ENCODE measurements at regions of chr3 and their contacts with region 1.

Region 1: GRCh38 chr3:51941798-51942602 is at the starts of genes PARP3 and RRP9:
- DNase-seq: peak; percentile 97 to 100 (median 99)
- ATAC-seq: peak; percentile 92
- H3K4me3 ChIP-seq: peak within 1 kb of the TSS; percentile 89
- H3K4me3 Mint-ChIP-seq: peak within 1 kb of the TSS; percentile 95
- H3K27ac ChIP-seq: peak within 1 kb of the TSS; percentile 39 to 71
- H3K27ac Mint-ChIP-seq: peak within 1 kb of the TSS; percentile 81
- H3K4me1 ChIP-seq: peaks cover 32% of the 10 kb centered on the region
- H3K4me1 Mint-ChIP-seq: peaks cover 36% of the 10 kb centered on the region
- H3K27me3 ChIP-seq: no peaks in the 10 kb centered on the region
- H3K27me3 Mint-ChIP-seq: no peaks in the 10 kb centered on the region
- CTCF ChIP-seq: peak; percentile 95
- total RNA-seq, gene PARP3: 5.8 to 6.4 TPM
- total RNA-seq, gene RRP9: 6.4 to 7.6 TPM

Region 2: GRCh38 chr3:51967384-51968169 is 25.6 kb after region 1 on chr3 and contains the start of gene PCBP4:
- CTCF ChIA-PET with region 1: no interaction called
- POLR2A ChIA-PET with region 1: interaction called, 13 read pairs
- intact Hi-C with region 1: no loop called
- DNase-seq: peak in 7 of 14 experiments; percentile 40 to 69 (median 53)
- ATAC-seq: peak; percentile 76
- H3K4me3 ChIP-seq: peak within 1 kb of the TSS; percentile 65
- H3K4me3 Mint-ChIP-seq: peak within 1 kb of the TSS; percentile 91
- H3K27ac ChIP-seq: peak within 1 kb of the TSS; percentile 38 to 44
- H3K27ac Mint-ChIP-seq: peak within 1 kb of the TSS; percentile 62
- H3K4me1 ChIP-seq: peaks cover 33% of the 10 kb centered on the region
- H3K4me1 Mint-ChIP-seq: peaks cover 40% of the 10 kb centered on the region
- H3K27me3 ChIP-seq: peaks cover 0 to 2% of the 10 kb centered on the region in 2 experiments
- H3K27me3 Mint-ChIP-seq: no peaks in the 10 kb centered on the region
- CTCF ChIP-seq: no peak
- total RNA-seq, gene PCBP4: 14.7 to 16.8 TPM

Region 3: GRCh38 chr3:51982782-51983577 is 41.0 kb after region 1 on chr3 and contains the start of gene ACY1:
- CTCF ChIA-PET with region 1: interaction called, 7 read pairs
- POLR2A ChIA-PET with region 1: interaction called, 15 read pairs
- intact Hi-C with region 1: no loop called
- DNase-seq: peak in 13 of 14 experiments; percentile 36 to 85 (median 56)
- ATAC-seq: peak; percentile 85
- H3K4me3 ChIP-seq: peak within 1 kb of the TSS; percentile 75
- H3K4me3 Mint-ChIP-seq: peak within 1 kb of the TSS; percentile 93
- H3K27ac ChIP-seq: peak within 1 kb of the TSS; percentile 69 to 85
- H3K27ac Mint-ChIP-seq: peak within 1 kb of the TSS; percentile 81
- H3K4me1 ChIP-seq: peaks cover 42% of the 10 kb centered on the region
- H3K4me1 Mint-ChIP-seq: peaks cover 20% of the 10 kb centered on the region
- H3K27me3 ChIP-seq: no peaks in the 10 kb centered on the region
- H3K27me3 Mint-ChIP-seq: no peaks in the 10 kb centered on the region
- CTCF ChIP-seq: peak; percentile 3
- total RNA-seq, gene ACY1: 4.9 TPM

Region 4: DNA sequence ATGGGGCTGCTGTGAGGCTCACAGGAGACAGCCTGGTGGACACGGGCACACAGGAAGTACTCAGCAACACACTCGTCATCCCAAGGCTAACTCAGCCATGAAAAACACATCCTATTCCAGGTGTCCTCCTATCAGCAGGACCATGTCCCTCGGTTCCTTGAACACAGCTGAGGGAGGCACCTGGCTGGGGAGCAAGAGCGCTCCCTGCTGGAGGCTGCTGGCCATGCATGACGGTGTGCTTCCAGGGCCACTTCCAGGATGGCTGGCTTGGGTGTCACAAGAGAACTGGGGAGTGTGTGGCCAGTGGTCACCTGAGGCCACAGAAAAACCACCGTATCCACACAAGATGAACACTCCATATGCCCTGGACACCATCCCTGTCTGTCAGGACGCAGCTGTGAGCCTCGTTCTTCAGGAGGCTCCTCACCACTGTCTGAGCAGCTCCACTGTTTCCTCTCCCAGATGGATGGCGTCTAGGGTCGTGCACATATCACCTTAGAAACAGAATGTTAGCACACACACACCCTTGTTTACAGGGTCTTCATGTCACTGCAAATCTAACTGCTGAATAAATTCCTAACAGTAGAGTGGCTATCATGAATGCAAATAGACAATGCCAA is 181.2 kb after region 1 on chr3:
- CTCF ChIA-PET with region 1: interaction called, 5 read pairs
- POLR2A ChIA-PET with region 1: no interaction called
- intact Hi-C with region 1: loop called (anchors 1 kb)
- DNase-seq: peak; percentile 62 to 88 (median 74)
- ATAC-seq: peak; percentile 98
- H3K4me3 ChIP-seq: no peak overlapping the region
- H3K4me3 Mint-ChIP-seq: no peak overlapping the region
- H3K27ac ChIP-seq: no peak overlapping the region
- H3K27ac Mint-ChIP-seq: no peak overlapping the region
- H3K4me1 ChIP-seq: peaks cover 8% of the 10 kb centered on the region
- H3K4me1 Mint-ChIP-seq: no peaks in the 10 kb centered on the region
- H3K27me3 ChIP-seq: no peaks in the 10 kb centered on the region
- H3K27me3 Mint-ChIP-seq: no peaks in the 10 kb centered on the region
- CTCF ChIP-seq: peak; percentile 93